MCF 10A (cell line): ENCODE measurements at regions of chr16 and their contacts with region 1.

Region 1: DNA sequence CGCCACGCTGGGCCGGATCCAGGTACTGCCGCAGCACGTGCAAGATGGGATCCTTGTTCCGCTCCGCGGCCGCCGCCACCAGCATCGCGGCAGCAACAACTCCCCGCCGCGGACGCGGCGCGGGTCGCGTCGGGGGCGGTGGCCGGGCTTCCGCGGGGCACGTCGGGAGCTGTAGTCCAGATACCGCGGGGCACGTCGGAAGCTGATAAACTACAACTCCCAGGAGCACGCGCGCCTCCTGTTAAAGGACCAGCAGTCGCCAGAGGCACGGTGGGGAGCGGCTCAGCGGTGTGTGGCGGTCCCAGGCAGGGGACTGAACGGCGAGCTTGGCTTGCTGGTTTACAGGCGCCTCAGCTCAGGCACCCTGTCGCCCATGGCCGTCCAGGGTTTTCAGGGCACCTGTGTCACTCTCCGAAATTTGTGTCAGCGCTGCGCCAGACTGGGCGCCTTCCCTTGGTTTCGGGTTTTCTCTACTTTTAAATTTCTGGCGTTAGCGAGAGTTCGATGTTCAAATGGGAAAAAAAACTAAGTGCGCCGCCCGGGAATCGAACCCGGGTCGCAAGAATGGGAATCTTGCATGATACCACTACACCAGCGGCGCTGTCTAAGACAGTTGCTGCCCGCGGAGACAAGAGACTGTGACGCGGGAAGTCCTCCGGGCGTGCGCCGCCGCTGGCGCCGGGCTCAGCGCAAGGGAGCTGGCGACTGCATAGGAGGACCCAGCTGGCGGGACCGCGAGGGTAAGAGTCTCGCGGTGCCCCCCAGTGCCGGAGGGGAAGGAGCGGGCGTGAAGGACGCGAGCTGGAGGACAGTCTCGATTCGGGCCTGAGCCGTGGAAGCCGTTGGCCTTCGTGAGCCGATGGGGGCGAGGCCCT is at the start of gene METTL26:
- DNase-seq: peak; percentile 95
- H3K4me3 Mint-ChIP-seq: peak within 1 kb of the TSS; percentile 91
- H3K27ac Mint-ChIP-seq: peak within 1 kb of the TSS; percentile 94
- H3K4me1 Mint-ChIP-seq: peaks cover 5% of the 10 kb centered on the region
- H3K27me3 Mint-ChIP-seq: no peaks in the 10 kb centered on the region
- CTCF ChIP-seq: no peak
- total RNA-seq, gene METTL26: 104 and 106 TPM in 2 replicates

Region 2: GRCh38 chr16:405548-406506 is 230.6 kb before region 1 on chr16:
- CTCF ChIA-PET with region 1: no interaction called
- POLR2A ChIA-PET with region 1: no interaction called
- intact Hi-C with region 1: no loop called
- DNase-seq: no peak
- H3K4me3 Mint-ChIP-seq: no peak overlapping the region
- H3K27ac Mint-ChIP-seq: no peak overlapping the region
- H3K4me1 Mint-ChIP-seq: no peaks in the 10 kb centered on the region
- H3K27me3 Mint-ChIP-seq: no peaks in the 10 kb centered on the region
- CTCF ChIP-seq: no peak

Region 3: GRCh38 chr16:610513-611334 is 25.7 kb before region 1 on chr16:
- CTCF ChIA-PET with region 1: no interaction called
- POLR2A ChIA-PET with region 1: no interaction called
- intact Hi-C with region 1: no loop called
- DNase-seq: peak; percentile 72
- H3K4me3 Mint-ChIP-seq: no peak overlapping the region
- H3K27ac Mint-ChIP-seq: no peak overlapping the region
- H3K4me1 Mint-ChIP-seq: peaks cover 15% of the 10 kb centered on the region
- H3K27me3 Mint-ChIP-seq: no peaks in the 10 kb centered on the region
- CTCF ChIP-seq: peak; percentile 73

Region 4: DNA sequence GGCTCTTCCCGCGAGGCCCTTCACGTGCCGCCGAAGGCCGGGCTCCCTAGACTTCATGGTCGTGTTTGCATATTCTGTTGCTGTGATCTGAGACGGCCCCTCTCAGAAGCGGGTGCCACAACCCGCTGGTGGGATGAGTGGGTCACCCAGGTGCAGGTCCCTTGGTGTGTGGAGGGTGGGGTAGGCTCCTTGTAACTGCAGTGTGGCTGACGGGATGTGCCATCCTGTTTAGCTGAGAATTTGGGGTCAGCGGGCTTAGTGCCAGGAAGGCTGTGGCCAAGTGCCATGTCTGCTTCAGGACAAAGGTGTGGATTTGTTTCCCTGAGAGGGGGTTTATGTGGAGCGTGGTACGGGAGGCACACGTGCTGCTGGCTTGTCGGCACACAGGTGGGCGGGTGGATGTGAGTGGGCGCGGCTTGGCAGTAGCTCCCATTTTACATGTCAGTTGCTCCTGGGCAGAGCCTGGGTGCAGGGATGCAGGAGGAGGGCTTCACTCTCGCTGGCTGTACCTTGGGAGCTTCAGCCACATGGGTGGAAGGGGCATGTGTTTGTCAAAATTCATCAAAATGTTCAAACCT is 14.8 kb before region 1 on chr16:
- CTCF ChIA-PET with region 1: no interaction called
- POLR2A ChIA-PET with region 1: interaction called, 43 read pairs
- intact Hi-C with region 1: no loop called
- DNase-seq: peak; percentile 42
- H3K4me3 Mint-ChIP-seq: peak overlapping the region; percentile 64
- H3K27ac Mint-ChIP-seq: peak overlapping the region; percentile 85
- H3K4me1 Mint-ChIP-seq: peaks cover 11% of the 10 kb centered on the region
- H3K27me3 Mint-ChIP-seq: no peaks in the 10 kb centered on the region
- CTCF ChIP-seq: no peak

Region 5: GRCh38 chr16:648781-649589 is 12.5 kb after region 1 on chr16 and contains the start of gene WDR90:
- CTCF ChIA-PET with region 1: interaction called, 3 read pairs
- POLR2A ChIA-PET with region 1: interaction called, 15 read pairs
- intact Hi-C with region 1: no loop called
- DNase-seq: peak; percentile 91
- H3K4me3 Mint-ChIP-seq: peak within 1 kb of the TSS; percentile 74
- H3K27ac Mint-ChIP-seq: peak within 1 kb of the TSS; percentile 88
- H3K4me1 Mint-ChIP-seq: peaks cover 14% of the 10 kb centered on the region
- H3K27me3 Mint-ChIP-seq: no peaks in the 10 kb centered on the region
- CTCF ChIP-seq: no peak
- total RNA-seq, gene WDR90: 40.4 and 47.9 TPM in 2 replicates

Region 6: DNA sequence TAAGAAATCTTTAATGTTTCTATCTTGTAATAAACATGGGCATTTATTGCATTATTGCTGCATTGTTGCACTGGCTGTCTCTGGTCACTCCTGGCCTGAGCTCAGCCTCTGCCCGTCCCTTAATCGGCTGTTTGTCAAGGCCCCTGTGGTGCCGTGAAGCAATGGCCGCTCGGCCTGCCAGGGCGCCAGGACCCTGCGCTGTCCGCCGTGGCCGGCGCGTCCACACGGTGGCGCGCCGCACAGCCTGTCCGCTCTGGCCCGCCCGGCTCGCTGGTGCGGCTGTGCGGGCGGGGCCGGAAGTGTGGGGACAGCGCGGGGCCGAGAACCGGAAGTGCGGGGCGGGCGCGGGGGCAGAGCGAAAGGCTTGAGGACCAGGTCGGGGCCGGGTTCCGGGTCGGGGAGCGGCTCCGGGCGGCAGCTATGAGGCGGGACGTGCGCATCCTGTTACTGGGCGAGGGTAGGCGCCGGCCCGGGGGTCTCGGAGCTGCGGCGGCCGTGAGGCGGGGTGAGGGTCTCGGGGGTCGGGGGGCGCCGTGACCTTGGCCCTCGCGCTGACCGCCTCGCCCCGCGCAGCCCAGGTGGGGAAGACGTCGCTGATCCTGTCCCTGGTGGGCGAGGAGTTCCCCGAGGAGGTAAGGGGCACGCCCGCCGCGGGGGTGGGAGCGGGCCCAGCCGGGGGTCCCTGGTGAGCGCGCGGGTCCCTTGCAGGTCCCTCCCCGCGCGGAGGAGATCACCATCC is 31.5 kb after region 1 on chr16 and contains the start of gene RHOT2:
- CTCF ChIA-PET with region 1: interaction called, 4 read pairs
- POLR2A ChIA-PET with region 1: interaction called, 10 read pairs
- intact Hi-C with region 1: no loop called
- DNase-seq: peak; percentile 87
- H3K4me3 Mint-ChIP-seq: peak within 1 kb of the TSS; percentile 75
- H3K27ac Mint-ChIP-seq: peak within 1 kb of the TSS; percentile 85
- H3K4me1 Mint-ChIP-seq: no peaks in the 10 kb centered on the region
- H3K27me3 Mint-ChIP-seq: no peaks in the 10 kb centered on the region
- CTCF ChIP-seq: peak; percentile 67
- total RNA-seq, gene RHOT2: 110 and 118 TPM in 2 replicates

Region 7: DNA sequence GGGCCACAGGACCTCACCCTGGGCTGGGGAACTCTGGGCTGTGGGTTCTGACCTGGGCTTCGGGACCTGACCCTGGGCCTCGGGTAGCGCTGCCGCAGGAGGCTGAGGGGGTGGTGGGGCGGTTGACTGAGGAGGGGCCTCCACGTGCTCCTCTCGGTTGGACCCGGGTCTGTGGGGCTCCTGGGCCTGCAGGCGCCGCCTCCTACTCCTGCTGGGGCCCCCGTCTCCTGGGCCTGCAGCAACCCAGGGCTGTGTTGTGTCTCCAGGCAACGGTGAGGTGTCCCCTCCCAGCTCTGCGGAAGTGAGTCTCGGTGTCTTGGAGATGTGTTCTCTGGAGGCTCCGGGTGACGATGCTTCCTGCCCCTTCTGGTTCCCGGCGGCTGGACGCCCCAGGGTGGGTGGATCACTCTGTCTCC is 205.6 kb after region 1 on chr16:
- CTCF ChIA-PET with region 1: no interaction called
- POLR2A ChIA-PET with region 1: no interaction called
- intact Hi-C with region 1: no loop called
- DNase-seq: no peak
- H3K4me3 Mint-ChIP-seq: no peak overlapping the region
- H3K27ac Mint-ChIP-seq: no peak overlapping the region
- H3K4me1 Mint-ChIP-seq: no peaks in the 10 kb centered on the region
- H3K27me3 Mint-ChIP-seq: no peaks in the 10 kb centered on the region
- CTCF ChIP-seq: no peak